Breast epithelium (tissue), 4 donors: ENCODE measurements at regions of chr2 and their contacts with region 1.

Region 1: GRCh38 chr2:211408516-211408915 is 852.1 kb downstream of the CPS1 start:
- DNase-seq: no peak
- H3K4me3 ChIP-seq: no peak overlapping the region
- H3K27ac ChIP-seq: no peak overlapping the region
- H3K4me1 ChIP-seq: no peaks in the 10 kb centered on the region
- H3K27me3 ChIP-seq: no peaks in the 10 kb centered on the region
- CTCF ChIP-seq: no peak
- POLR2A ChIP-seq: no peak

Region 2: DNA sequence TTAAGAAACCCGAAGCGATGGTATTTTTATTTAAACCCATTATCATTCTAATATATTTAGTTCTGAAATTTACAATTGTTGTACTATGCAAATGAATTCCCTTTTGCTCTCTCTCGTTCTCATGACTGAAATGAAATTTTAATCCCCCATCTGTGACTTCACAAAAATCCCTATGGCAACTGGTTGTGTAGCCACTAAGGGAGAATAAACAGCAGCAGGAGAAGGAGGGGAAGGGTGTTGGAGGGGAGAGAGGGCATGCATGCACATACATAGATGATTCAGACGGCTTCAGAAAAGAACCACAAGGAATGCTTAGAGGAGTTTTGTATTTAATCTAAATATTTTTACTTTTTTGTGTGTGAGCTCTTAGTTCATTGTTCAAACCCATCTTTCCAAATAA is 815.4 kb before region 1 on chr2:
- intact Hi-C with region 1: loop called (anchors 10 kb)
- DNase-seq: no peak
- H3K4me3 ChIP-seq: no peak overlapping the region
- H3K27ac ChIP-seq: no peak overlapping the region
- H3K4me1 ChIP-seq: no peaks in the 10 kb centered on the region
- H3K27me3 ChIP-seq: no peaks in the 10 kb centered on the region
- CTCF ChIP-seq: no peak
- POLR2A ChIP-seq: no peak